ENCODE measurements at regions of chr19 and their contacts with region 1.

Region 1: GRCh38 chr19:41263850-41264580 is at the start of gene HNRNPUL1:
- DNase-seq: peak; percentile 96 to 100 (median 99)
- ATAC-seq: peak; percentile 56 to 72 (median 64)
- H3K4me3 ChIP-seq: peak within 1 kb of the TSS; percentile 85 to 93
- H3K4me3 Mint-ChIP-seq: peak within 1 kb of the TSS; percentile 92 to 100 (median 98)
- H3K27ac ChIP-seq: peak within 1 kb of the TSS; percentile 98
- H3K27ac Mint-ChIP-seq: peak within 1 kb of the TSS; percentile 99 to 100
- H3K4me1 ChIP-seq: peaks cover 10 to 48% of the 10 kb centered on the region in 2 experiments
- H3K4me1 Mint-ChIP-seq: peaks cover 46 to 51% (median 46%) of the 10 kb centered on the region in 3 donors
- H3K27me3 ChIP-seq: no peaks in the 10 kb centered on the region
- H3K27me3 Mint-ChIP-seq: no peaks in the 10 kb centered on the region
- total RNA-seq, gene HNRNPUL1: 275 to 350 (median 307) TPM

Region 2: DNA sequence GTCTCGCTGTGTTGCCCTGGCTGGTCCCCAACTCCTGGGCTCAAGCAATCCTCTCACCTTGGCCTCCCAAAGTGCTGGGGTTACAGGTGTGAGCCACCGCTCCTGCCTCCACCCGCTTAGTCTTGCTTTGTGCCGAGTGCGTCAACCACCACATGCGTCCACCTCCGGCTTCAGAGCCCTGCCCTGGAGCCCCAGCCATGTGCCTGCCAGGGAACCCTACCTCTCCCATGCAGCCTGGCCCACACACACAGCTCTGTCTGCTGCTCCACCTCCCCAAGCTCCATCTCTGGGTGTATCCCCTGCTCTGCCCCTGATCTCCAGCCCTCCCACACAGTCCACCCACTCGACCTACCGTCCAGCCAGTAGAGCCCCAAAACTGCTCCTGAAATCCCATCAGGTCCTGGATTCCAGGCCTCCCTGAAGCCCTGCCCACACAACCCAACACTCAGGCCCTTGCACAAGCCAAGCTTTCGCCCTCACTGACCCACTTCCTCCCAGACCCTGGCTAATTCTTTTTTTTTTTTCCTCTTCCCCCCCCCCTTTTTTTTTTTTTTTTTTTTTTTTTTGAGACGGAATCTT is 140.2 kb before region 1 on chr19:
- CTCF ChIA-PET with region 1: interaction called in 1 of 2 experiments, 4 read pairs
- POLR2A ChIA-PET with region 1: interaction called in 1 of 2 experiments, 12 read pairs
- DNase-seq: no peak
- ATAC-seq: no peak
- H3K4me3 ChIP-seq: no peak overlapping the region
- H3K4me3 Mint-ChIP-seq: no peak overlapping the region
- H3K27ac ChIP-seq: no peak overlapping the region
- H3K27ac Mint-ChIP-seq: peak overlapping the region; percentile 19 to 43
- H3K4me1 ChIP-seq: peaks cover 4 to 49% of the 10 kb centered on the region in 2 experiments
- H3K4me1 Mint-ChIP-seq: peaks cover 51 to 56% (median 54%) of the 10 kb centered on the region in 3 donors
- H3K27me3 ChIP-seq: no peaks in the 10 kb centered on the region
- H3K27me3 Mint-ChIP-seq: no peaks in the 10 kb centered on the region

Region 3: DNA sequence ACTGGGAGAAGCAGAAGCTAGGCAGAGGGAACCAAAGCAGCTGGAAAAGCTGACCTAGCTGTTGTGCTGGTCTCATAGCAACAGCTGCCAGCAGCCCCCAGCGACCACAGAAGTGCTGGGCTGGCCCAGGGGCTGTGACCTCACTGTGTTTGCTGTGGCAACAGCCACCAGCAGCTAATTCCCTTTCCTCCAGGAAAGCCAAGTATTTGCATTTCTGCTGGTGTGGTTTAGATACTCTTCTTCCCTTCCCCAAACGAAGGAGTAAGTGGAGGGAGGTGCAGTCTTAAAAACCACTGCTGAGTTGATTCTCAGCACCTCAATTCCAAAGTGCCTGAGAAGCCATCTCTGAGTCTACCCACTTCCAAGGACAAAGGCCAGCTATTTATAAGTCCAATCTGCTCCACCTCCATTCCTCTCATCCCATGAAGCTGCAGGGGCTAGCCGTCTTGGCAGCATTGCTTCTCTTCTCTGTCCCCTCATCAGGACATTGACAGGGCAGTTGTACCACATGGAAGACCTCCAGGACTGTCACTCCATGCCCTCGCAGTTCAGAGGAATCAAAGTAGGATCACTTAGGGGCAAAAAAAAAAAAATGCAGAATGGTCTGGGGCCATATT is 34.4 kb after region 1 on chr19:
- CTCF ChIA-PET with region 1: interaction called in 1 of 2 experiments, 18 read pairs
- POLR2A ChIA-PET with region 1: interaction called, 14 to 16 read pairs
- DNase-seq: peak in 28 of 35 experiments; percentile 16 to 70 (median 48)
- ATAC-seq: peak in 2 of 4 experiments; percentile 16 to 59
- H3K4me3 ChIP-seq: no peak overlapping the region
- H3K4me3 Mint-ChIP-seq: peak overlapping the region in 2 of 3 donors; percentile 34 to 48
- H3K27ac ChIP-seq: peak overlapping the region; percentile 97
- H3K27ac Mint-ChIP-seq: peak overlapping the region; percentile 96 to 99
- H3K4me1 ChIP-seq: peaks cover 38 to 72% of the 10 kb centered on the region in 2 experiments
- H3K4me1 Mint-ChIP-seq: peaks cover 89 to 94% (median 90%) of the 10 kb centered on the region in 3 donors
- H3K27me3 ChIP-seq: no peaks in the 10 kb centered on the region
- H3K27me3 Mint-ChIP-seq: no peaks in the 10 kb centered on the region

Region 4: GRCh38 chr19:41363753-41364523 is 99.9 kb after region 1 on chr19 and contains the start of gene B9D2:
- CTCF ChIA-PET with region 1: interaction called in 1 of 2 experiments, 4 read pairs
- POLR2A ChIA-PET with region 1: interaction called in 1 of 2 experiments, 33 read pairs
- DNase-seq: peak; percentile 96 to 99 (median 99)
- ATAC-seq: peak; percentile 94 to 97 (median 96)
- H3K4me3 ChIP-seq: peak within 1 kb of the TSS; percentile 85
- H3K4me3 Mint-ChIP-seq: peak within 1 kb of the TSS; percentile 83 to 94 (median 89)
- H3K27ac ChIP-seq: peak within 1 kb of the TSS; percentile 99
- H3K27ac Mint-ChIP-seq: peak within 1 kb of the TSS; percentile 98 to 100
- H3K4me1 ChIP-seq: peaks cover 13 to 31% of the 10 kb centered on the region in 2 experiments
- H3K4me1 Mint-ChIP-seq: peaks cover 28 to 40% (median 36%) of the 10 kb centered on the region in 3 donors
- H3K27me3 ChIP-seq: no peaks in the 10 kb centered on the region
- H3K27me3 Mint-ChIP-seq: no peaks in the 10 kb centered on the region
- total RNA-seq, gene B9D2: 15.3 to 27.9 (median 16.4) TPM